Activated CD4-positive, alpha-beta memory T cell treated with anti-CD3 and anti-CD28 coated beads for 36 hours (primary cell): ENCODE measurements at regions of chr3 and their contacts with region 1.

Region 1: GRCh38 chr3:152071924-152072323 is 196.8 kb upstream of the MBNL1 start:
- DNase-seq: no peak
- H3K4me3 Mint-ChIP-seq: no peak overlapping the region
- H3K27ac Mint-ChIP-seq: no peak overlapping the region
- H3K4me1 Mint-ChIP-seq: peaks cover 2% of the 10 kb centered on the region
- H3K27me3 Mint-ChIP-seq: no peaks in the 10 kb centered on the region

Region 2: DNA sequence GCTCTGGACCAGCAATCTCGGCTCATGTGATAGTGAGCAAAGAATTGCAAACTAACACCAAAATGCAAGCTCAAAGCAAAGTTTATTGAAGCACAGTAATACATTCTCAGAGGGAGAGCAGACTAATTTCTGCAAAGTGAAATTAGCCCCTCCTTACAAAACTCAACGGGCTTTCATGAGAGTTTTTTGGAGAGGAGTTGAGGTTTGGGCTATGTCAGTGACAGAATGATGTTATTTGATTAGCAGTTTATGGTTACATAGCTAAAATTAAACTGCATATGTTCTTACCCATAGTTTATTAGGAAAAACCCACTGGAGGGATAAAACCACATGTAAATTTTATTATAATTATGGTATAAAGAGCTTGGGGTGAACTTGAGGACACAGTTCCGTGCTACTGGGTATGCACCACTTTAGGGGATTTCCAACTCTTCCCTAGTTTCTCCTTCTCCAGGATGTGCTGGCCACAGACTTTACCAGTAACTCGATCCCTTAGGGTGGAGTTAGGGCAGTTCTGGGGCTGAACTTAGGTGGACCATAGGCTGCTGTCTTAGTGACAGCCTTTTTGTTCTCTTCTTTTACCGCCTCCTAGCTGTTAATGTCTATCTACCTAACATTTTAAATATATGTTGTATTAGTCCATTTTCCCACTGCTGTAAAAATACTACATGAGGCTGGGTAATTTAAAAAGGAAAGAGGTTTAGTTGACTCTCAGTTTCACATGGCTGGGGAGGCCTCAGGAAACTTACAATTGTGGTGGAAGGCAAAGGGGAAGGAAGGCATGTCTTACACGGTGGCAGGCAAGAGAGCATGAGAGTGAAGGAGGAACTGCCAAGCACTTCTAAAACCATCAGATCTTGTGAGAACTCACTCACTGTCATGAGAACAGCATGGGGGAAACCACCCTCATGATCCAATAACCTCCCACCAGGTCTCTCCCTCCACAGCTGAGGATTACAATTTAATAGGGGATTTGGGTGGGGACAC is 347.1 kb before region 1 on chr3:
- CTCF ChIA-PET with region 1: no interaction called
- POLR2A ChIA-PET with region 1: no interaction called
- intact Hi-C with region 1: no loop called
- DNase-seq: no peak
- H3K4me3 Mint-ChIP-seq: no peak overlapping the region
- H3K27ac Mint-ChIP-seq: no peak overlapping the region
- H3K4me1 Mint-ChIP-seq: no peaks in the 10 kb centered on the region
- H3K27me3 Mint-ChIP-seq: no peaks in the 10 kb centered on the region

Region 3: DNA sequence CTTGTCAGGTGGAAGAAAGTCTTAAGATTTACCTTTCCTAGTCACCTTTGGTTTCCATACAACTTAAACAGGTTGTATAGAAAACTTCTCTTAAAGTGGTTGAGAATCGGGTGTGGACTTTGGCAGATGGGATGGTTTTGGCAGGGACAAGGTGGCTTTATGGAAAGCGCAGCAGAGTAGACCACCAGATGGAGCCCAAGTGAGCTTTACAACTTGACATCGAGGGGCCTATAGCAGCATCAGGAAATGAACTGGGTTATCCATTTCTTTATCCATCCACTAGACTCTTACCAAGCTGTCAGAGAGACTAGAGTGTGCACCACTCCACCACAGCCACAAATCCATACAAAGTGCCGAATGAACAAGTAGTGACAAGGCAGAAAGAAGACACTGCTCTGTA is 111.5 kb after region 1 on chr3:
- CTCF ChIA-PET with region 1: interaction called, 9 read pairs
- POLR2A ChIA-PET with region 1: no interaction called
- intact Hi-C with region 1: loop called (anchors 5 kb)
- DNase-seq: peak; percentile 68
- H3K4me3 Mint-ChIP-seq: peak overlapping the region; percentile 35
- H3K27ac Mint-ChIP-seq: no peak overlapping the region
- H3K4me1 Mint-ChIP-seq: peaks cover 70% of the 10 kb centered on the region
- H3K27me3 Mint-ChIP-seq: no peaks in the 10 kb centered on the region

Region 4: GRCh38 chr3:152322756-152323155 is 250.8 kb after region 1 on chr3:
- CTCF ChIA-PET with region 1: no interaction called
- POLR2A ChIA-PET with region 1: no interaction called
- intact Hi-C with region 1: loop called (anchors 10 kb)
- DNase-seq: no peak
- H3K4me3 Mint-ChIP-seq: no peak overlapping the region
- H3K27ac Mint-ChIP-seq: peak overlapping the region; percentile 24
- H3K4me1 Mint-ChIP-seq: peaks cover 82% of the 10 kb centered on the region
- H3K27me3 Mint-ChIP-seq: no peaks in the 10 kb centered on the region

Region 5: GRCh38 chr3:152471814-152472671 is 400.1 kb after region 1 on chr3:
- CTCF ChIA-PET with region 1: interaction called, 25 read pairs
- POLR2A ChIA-PET with region 1: no interaction called
- intact Hi-C with region 1: loop called (anchors 1 kb)
- DNase-seq: peak; percentile 80
- H3K4me3 Mint-ChIP-seq: peak overlapping the region; percentile 39
- H3K27ac Mint-ChIP-seq: peak overlapping the region; percentile 39
- H3K4me1 Mint-ChIP-seq: peaks cover 13% of the 10 kb centered on the region
- H3K27me3 Mint-ChIP-seq: no peaks in the 10 kb centered on the region